AG04449 (cell line): ENCODE measurements at regions of chr5 and their contacts with region 1.

Region 1: DNA sequence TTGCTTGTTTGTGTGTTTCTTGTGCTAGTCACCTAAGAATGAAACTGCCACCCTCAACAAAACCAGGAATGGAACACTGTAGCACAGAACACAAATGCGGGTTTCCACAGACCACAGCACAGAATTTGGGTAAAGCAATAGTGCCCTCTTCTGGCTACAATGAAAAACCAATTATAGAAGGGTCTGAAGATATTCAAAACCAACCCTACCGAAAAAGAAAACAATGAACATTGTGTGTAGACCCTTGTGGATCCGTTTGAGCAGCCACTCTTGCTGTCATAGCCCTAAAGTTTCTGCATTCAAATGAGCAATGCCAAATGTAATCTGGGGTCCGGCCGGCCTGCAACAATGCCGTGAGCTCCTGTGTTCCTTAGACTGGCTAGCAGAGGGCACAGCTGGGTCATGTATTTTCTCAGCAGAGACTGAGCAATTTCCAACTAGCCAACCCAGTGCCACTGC is 8.3 kb upstream of the ENC1 start:
- DNase-seq: no peak
- H3K4me3 ChIP-seq: no peak overlapping the region
- CTCF ChIP-seq: peak; percentile 53

Region 2: DNA sequence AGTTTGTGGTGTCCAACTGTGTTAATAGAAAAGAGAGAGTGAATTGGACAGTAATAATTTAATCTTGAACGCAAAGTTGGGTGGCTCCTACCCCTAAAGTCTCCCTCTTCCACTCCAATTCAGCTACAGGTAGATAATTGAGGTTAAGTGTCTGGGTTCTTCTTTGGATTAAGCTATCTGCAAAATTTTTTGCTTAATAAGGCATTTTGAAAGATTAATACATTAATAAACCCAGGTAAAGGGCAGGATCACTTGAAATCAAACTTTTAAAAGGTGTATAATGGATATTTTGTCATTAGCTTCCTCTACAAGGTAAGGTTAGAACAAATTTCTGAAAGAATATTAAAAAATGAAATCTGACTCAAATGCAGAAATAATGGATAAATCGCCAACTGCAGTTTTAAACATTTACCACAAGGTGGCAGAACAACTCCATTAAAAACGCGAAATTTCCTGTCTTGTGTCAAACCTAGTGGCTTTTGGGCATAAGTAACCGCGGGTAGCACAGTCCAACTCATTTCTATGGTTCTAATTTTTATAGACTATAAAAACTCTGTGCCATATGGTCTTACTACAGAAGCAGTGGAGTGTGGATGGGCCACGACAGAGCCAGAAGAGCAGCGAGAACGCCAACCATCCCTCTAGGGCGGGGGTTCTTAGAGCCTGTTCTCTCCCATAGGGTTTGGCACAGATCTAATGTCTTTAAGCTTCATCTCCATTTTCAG is 746.4 kb before region 1 on chr5:
- CTCF ChIA-PET with region 1: interaction called, 143 read pairs
- POLR2A ChIA-PET with region 1: no interaction called
- DNase-seq: peak; percentile 28
- H3K4me3 ChIP-seq: no peak overlapping the region
- CTCF ChIP-seq: peak; percentile 45

Region 3: GRCh38 chr5:73911761-73912393 is 737.0 kb before region 1 on chr5:
- CTCF ChIA-PET with region 1: interaction called, 40 read pairs
- POLR2A ChIA-PET with region 1: no interaction called
- DNase-seq: no peak
- H3K4me3 ChIP-seq: no peak overlapping the region
- CTCF ChIP-seq: no peak

Region 4: DNA sequence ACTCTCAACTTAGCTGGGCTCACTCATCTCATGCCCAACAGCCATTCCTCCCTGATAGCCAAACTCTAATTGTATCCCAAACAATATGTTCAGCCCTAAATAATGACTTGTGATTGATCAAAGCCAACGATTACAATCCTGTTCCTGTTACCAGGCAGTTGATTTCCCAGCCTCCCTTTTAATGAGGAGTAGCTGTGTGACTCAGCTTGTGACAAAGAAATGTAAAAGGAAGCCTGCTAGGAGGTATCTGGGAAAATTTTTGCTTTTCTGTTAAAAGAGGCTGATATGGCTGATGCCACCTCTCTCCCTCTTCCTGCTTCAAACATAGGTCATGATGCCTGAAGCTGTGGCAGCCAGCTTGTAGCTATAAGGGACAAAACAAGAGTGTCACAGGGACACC is 11.3 kb after region 1 on chr5:
- CTCF ChIA-PET with region 1: interaction called, 37 read pairs
- POLR2A ChIA-PET with region 1: no interaction called
- DNase-seq: no peak
- H3K4me3 ChIP-seq: no peak overlapping the region
- CTCF ChIP-seq: no peak

Region 5: DNA sequence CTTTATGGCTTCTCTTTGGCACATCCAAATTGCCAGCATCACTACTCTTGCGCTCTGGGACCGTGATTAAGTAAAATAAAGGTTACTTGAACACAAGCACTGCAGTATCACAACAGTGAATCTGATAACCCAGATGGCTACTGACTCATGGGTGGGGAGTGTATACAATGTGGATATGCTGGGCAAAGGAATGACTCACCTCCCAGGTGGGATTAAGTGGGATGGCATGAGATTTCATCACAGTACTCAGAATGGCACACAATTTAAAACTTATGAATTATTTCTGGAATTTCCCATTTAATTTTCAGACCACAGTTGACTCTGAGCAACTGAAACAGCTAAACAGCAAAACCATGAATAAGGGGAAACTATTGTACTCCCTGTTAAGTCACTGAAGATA is 113.7 kb after region 1 on chr5:
- CTCF ChIA-PET with region 1: no interaction called
- POLR2A ChIA-PET with region 1: no interaction called
- DNase-seq: peak; percentile 29
- H3K4me3 ChIP-seq: no peak overlapping the region
- CTCF ChIP-seq: no peak

Region 6: DNA sequence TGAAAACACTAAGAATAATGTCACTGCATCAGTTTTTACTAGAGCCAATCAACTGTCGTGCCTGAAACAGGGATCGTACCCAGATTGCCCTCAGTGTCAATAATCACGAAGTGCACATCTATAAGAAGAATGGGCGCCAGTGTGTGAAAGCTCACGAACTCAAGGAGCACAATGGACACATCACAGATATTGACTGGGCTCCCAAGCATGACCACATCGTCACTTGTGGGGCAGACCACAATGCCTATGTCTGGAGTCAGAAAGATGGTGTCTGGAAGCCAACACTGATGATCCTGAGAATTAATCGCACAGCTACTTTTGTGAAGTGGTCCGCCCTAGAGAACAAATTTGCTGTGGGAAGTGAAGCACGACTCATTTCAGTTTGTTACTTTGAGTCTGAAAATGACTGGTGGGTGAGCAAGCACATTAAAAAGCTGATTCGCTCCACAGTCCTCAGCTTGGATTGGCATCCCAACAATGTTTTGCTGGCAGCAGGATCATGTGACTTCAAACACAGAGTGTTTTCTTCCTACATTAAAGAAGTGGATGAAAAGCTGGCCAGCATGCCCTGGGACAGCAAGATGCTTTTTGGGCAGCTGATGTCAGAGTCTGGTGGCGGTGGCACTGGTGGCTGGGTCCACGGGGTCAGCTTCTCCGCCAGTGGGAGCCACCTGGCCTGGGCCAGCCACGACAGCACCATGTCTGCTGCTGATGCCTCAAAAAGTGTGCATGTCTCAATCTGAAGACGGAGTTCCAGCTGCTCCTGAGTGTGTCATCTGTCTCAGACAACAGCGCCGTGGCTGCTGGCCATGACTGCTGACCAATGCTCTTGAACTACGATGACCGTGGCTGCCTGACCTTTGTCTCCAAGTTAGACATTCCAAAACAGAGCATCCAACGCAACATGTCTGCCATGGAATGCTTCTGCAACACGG is 150.4 kb after region 1 on chr5:
- CTCF ChIA-PET with region 1: no interaction called
- POLR2A ChIA-PET with region 1: no interaction called
- DNase-seq: no peak
- H3K4me3 ChIP-seq: no peak overlapping the region
- CTCF ChIP-seq: no peak